Heart right ventricle (tissue), 16 donors: ENCODE measurements at regions of chr12 and their contacts with region 1.

Region 1: GRCh38 chr12:53198486-53199110 is 8.5 kb downstream of the ITGB7 start:
- DNase-seq: no peak
- ATAC-seq: no peak
- H3K4me3 ChIP-seq: no peak overlapping the region
- H3K27ac ChIP-seq: peak overlapping the region in 1 of 10 donors; percentile 50
- H3K4me1 ChIP-seq: peaks cover 0 to 39% (median 8%) of the 10 kb centered on the region in 9 donors
- H3K27me3 ChIP-seq: no peaks in the 10 kb centered on the region
- CTCF ChIP-seq: no peak

Region 2: GRCh38 chr12:53065975-53066931 is 132.3 kb before region 1 on chr12:
- intact Hi-C with region 1: loop called in 9 of 10 experiments (anchors 5 to 10 kb)
- DNase-seq: peak; percentile 82 to 86
- ATAC-seq: peak; percentile 56 to 77 (median 66)
- H3K4me3 ChIP-seq: no peak overlapping the region
- H3K27ac ChIP-seq: peak overlapping the region in 9 of 10 donors; percentile 17 to 88 (median 78)
- H3K4me1 ChIP-seq: peaks cover 62 to 100% (median 87%) of the 10 kb centered on the region in 9 donors
- H3K27me3 ChIP-seq: no peaks in the 10 kb centered on the region
- CTCF ChIP-seq: peak; percentile 87 to 96 (median 90)

Region 3: GRCh38 chr12:53159195-53159839 is 39.3 kb before region 1 on chr12:
- intact Hi-C with region 1: loop called in 7 of 10 experiments (anchors 1 to 5 kb)
- DNase-seq: peak; percentile 84
- ATAC-seq: peak; percentile 81 to 93 (median 84)
- H3K4me3 ChIP-seq: no peak overlapping the region
- H3K27ac ChIP-seq: no peak overlapping the region
- H3K4me1 ChIP-seq: peaks cover 0 to 7% (median 2%) of the 10 kb centered on the region in 9 donors
- H3K27me3 ChIP-seq: no peaks in the 10 kb centered on the region
- CTCF ChIP-seq: peak; percentile 89 to 97 (median 94)